ENCODE measurements at regions of chr6 and their contacts with region 1.

Region 1: GRCh38 chr6:153511896-153512496 is 380.9 kb upstream of the RGS17 start:
- DNase-seq: no peak
- ATAC-seq: peak in 2 of 4 donors; percentile 16 to 43
- H3K4me3 ChIP-seq: no peak overlapping the region
- H3K27ac ChIP-seq: no peak overlapping the region
- H3K4me1 ChIP-seq: no peaks in the 10 kb centered on the region
- H3K27me3 ChIP-seq: no peaks in the 10 kb centered on the region
- CTCF ChIP-seq: peak; percentile 50 to 72 (median 62)
- POLR2A ChIP-seq: no peak

Region 2: DNA sequence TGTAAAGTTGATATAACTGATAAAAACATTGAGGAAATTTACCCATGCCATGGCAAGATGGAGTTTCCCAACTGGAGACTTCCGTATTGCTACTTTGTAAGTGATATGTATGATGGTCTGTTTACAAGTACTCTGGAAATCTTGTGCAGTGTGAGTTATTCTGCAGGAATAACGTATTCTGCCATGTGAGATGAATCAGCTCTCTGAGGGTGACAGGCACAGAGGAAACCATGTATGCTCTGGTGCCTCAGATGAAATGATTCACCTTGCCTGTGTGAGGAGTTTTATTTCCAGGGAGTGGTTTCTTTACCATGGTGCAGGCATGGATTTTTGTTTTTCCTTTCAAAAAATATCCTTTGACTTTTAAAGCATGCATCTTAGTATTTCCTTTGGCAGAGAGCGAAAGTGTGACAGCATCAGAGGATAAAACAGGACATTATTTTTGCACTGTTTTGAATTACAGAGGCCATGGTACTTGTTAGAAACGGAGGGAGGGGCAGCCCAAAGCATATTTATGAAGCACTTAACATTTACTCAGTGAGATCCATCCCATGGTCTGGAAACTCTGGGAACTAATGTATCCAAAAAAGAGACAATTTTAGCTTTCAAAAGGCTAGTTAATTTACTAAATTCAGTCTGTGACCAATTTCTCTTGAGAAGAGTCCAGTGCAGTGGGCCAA is 473.5 kb before region 1 on chr6:
- intact Hi-C with region 1: loop called in 9 of 10 experiments (anchors 5 to 10 kb)
- DNase-seq: no peak
- ATAC-seq: no peak
- H3K4me3 ChIP-seq: no peak overlapping the region
- H3K27ac ChIP-seq: peak overlapping the region in 1 of 12 donors; percentile 3
- H3K4me1 ChIP-seq: no peaks in the 10 kb centered on the region
- H3K27me3 ChIP-seq: no peaks in the 10 kb centered on the region
- CTCF ChIP-seq: no peak
- POLR2A ChIP-seq: no peak

Region 3: DNA sequence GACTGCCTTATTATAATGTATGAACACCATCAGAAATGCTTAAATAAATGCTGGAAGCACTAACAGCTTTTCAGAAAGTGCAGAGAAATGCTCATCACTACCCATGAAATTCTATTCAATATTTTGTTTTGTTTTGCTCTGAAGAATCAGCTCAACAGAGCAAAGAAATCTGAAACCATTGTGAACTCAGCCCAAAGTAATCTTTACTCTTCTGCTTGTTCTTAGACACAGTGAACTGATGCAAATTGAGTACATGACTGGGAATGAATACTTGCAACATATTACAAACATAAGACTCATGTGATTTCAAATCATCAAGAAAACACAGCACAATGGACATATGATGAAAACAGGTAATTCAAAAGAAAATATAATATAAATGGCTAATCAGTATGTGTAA is 122.4 kb after region 1 on chr6:
- intact Hi-C with region 1: no loop called
- DNase-seq: no peak
- ATAC-seq: no peak
- H3K4me3 ChIP-seq: no peak overlapping the region
- H3K27ac ChIP-seq: no peak overlapping the region
- H3K4me1 ChIP-seq: no peaks in the 10 kb centered on the region
- H3K27me3 ChIP-seq: no peaks in the 10 kb centered on the region
- CTCF ChIP-seq: no peak
- POLR2A ChIP-seq: no peak

Measured in heart left ventricle (tissue), 16 donors.